IMR-90 (cell line): ENCODE measurements at regions of chr2 and their contacts with region 1.

Region 1: GRCh38 chr2:202671317-202672035 is 36.7 kb downstream of the FAM117B start:
- DNase-seq: no peak
- ATAC-seq: no peak
- H3K4me3 ChIP-seq: no peak overlapping the region
- H3K27ac ChIP-seq: no peak overlapping the region
- H3K4me1 ChIP-seq: no peaks in the 10 kb centered on the region
- H3K27me3 ChIP-seq: no peaks in the 10 kb centered on the region
- CTCF ChIP-seq: no peak
- POLR2A ChIP-seq: no peak
- RAD21 ChIP-seq: no peak

Region 2: DNA sequence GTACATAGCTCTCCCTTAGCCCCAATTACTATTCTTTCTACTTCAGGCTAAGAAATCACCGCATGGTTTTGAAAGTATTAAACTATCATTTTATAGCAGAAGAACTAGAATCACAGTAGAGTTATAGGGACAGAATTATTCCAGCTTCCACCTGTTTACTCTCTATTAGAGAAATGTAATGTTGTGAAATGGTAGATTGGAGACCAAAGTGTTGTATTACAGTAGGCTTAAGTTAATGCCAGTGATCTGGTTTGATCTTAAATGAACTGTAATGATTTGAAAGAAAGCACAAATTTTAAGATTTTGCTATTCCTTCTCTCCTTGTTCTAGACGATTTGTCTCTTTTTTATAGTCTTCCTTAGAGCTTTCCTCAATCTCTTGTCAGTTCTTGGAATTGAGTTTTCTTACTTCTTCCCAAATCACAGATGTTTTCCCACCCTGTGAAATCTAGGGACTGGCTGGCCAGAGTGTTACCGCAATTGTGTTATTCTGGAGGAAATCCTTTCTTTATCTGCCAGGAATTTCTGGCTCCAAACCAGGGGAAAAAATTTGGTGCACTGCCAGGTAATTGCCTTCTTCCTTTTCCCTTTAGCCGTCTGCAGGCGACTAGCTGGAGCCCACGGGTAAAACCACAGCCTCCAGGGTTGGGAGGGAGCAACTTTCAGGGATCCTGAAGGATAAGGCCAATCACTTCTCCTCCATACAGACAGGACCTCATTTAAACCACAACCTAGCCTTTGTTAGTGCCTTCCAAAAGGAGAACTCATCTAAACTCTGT is 354.2 kb before region 1 on chr2:
- CTCF ChIA-PET with region 1: no interaction called
- POLR2A ChIA-PET with region 1: interaction called, 12 read pairs
- dilution Hi-C with region 1: no loop called
- in situ Hi-C with region 1: no loop called
- intact Hi-C with region 1: no loop called
- DNase-seq: peak; percentile 81
- ATAC-seq: peak; percentile 84
- H3K4me3 ChIP-seq: no peak overlapping the region
- H3K27ac ChIP-seq: no peak overlapping the region
- H3K4me1 ChIP-seq: peaks cover 2% of the 10 kb centered on the region; the same call in 1 of the 2 replicates
- H3K27me3 ChIP-seq: no peaks in the 10 kb centered on the region
- CTCF ChIP-seq: no peak
- POLR2A ChIP-seq: no peak
- RAD21 ChIP-seq: no peak

Region 3: DNA sequence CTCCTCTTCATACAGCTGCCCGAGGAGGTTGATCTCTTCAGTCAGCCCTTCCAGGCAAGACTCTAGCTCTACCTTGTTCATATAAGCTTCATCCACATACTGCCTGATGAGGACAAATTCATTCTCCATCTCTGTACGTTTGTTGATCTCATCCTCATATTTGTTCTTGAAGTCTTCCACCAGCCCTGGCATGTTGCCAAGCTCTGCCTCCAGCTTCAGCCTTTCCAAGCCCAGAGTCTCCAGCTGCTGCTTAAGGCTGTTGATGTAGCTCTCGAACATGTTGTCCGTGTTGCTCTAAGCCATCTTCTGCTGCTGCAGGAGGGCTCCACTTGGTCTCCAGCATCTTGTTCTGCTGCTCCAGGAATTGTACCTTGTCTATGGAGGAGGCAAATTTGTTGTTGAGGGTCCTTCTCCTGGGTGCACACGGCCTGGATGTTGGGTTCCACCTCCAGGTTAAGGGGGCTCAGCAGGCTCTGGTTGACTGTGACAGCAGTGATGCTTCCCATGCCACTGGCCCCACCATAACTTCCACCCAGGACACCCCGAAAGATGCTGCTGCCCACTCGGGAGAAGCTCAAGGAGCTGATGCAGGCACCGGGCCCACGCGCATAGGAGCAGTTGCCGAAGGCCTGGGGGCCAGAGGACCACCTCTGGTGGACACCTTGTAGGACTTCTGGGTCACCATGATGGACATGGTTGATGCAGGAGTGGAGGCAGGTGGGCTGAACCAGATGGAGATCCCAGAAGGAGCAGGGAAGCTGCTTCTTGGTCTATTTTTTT is 169.8 kb after region 1 on chr2:
- CTCF ChIA-PET with region 1: no interaction called
- POLR2A ChIA-PET with region 1: no interaction called
- dilution Hi-C with region 1: no loop called
- in situ Hi-C with region 1: no loop called
- intact Hi-C with region 1: no loop called
- DNase-seq: no peak
- ATAC-seq: no peak
- H3K4me3 ChIP-seq: no peak overlapping the region
- H3K27ac ChIP-seq: no peak overlapping the region
- H3K4me1 ChIP-seq: no peaks in the 10 kb centered on the region
- H3K27me3 ChIP-seq: no peaks in the 10 kb centered on the region
- CTCF ChIP-seq: no peak
- POLR2A ChIP-seq: no peak
- RAD21 ChIP-seq: no peak